ENCODE measurements at regions of chr10 and their contacts with region 1.

Region 1: GRCh38 chr10:80596391-80597257 is 58.9 kb downstream of the SH2D4B start:
- DNase-seq: peak; percentile 59
- ATAC-seq: peak; percentile 82
- H3K4me3 Mint-ChIP-seq: no peak overlapping the region
- H3K27ac Mint-ChIP-seq: no peak overlapping the region
- H3K4me1 Mint-ChIP-seq: no peaks in the 10 kb centered on the region
- H3K27me3 Mint-ChIP-seq: peaks cover 4% of the 10 kb centered on the region

Region 2: DNA sequence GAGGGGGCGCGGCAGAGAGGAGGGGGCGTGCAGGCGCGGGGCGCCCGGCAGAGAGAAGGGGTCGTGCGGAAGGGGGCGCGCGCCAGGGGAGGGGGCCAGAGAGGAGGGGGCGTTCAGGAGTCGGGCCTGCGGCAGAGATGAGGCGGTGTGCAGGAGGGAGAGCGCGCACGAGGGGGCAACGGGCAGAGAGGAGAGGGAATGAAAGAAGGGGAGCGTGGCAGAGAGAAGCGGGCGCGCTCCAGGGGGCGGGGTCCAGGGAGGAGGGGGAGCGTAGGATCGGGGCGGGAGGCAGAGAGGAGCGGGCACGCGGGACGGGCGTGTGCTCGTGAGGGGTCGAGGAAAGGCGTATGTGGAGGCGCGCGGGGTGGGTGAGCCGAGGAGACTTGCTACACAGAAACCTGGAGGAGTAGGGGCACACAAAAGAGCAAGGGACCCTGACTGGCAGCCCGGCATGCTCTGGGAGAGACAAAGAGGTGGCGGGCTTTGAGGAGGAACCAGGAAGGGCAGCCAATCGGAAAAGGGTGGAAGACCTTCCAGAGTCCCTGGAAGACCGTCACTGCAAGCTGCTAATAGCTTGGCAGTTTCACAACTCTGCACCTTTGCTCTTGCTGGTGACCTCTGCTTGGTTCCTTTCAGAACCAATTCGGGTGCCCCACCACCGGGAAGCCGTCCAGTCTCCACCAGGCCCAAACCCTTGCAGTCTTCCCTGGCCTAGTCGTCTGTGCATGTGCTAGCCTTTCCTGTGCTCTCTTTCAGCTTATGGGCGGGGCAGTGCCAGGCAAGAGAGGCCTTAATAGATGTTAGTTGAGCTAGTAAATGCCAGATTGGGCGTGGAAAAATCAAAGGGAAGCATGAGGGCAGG is 239.4 kb before region 1 on chr10:
- CTCF ChIA-PET with region 1: no interaction called
- POLR2A ChIA-PET with region 1: no interaction called
- DNase-seq: no peak
- ATAC-seq: peak; percentile 24
- H3K4me3 Mint-ChIP-seq: peak overlapping the region; percentile 22
- H3K27ac Mint-ChIP-seq: no peak overlapping the region
- H3K4me1 Mint-ChIP-seq: peaks cover 10% of the 10 kb centered on the region
- H3K27me3 Mint-ChIP-seq: peaks cover 38% of the 10 kb centered on the region

Region 3: DNA sequence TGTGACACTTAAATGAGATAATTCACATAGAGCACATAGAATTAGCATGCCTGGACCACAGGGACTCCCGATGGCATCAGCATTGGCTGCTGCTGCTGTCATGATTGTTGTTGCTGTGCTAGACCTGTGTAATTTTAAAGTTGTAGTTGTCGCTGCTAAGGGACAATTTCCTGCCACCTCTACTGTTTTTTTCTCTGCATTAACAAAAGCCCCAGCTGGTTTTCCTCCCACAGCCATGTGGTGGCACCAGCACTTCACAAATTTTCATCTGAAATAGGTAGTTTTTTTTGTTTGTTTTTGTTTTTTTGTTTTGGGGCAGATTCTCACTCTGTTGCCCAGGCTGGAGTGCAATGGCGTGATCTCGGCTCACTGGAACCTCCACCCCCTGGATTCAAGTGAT is 213.6 kb before region 1 on chr10:
- CTCF ChIA-PET with region 1: interaction called, 11 read pairs
- POLR2A ChIA-PET with region 1: no interaction called
- DNase-seq: peak; percentile 76
- ATAC-seq: peak; percentile 68
- H3K4me3 Mint-ChIP-seq: no peak overlapping the region
- H3K27ac Mint-ChIP-seq: no peak overlapping the region
- H3K4me1 Mint-ChIP-seq: peaks cover 14% of the 10 kb centered on the region
- H3K27me3 Mint-ChIP-seq: peaks cover 12% of the 10 kb centered on the region

Region 4: DNA sequence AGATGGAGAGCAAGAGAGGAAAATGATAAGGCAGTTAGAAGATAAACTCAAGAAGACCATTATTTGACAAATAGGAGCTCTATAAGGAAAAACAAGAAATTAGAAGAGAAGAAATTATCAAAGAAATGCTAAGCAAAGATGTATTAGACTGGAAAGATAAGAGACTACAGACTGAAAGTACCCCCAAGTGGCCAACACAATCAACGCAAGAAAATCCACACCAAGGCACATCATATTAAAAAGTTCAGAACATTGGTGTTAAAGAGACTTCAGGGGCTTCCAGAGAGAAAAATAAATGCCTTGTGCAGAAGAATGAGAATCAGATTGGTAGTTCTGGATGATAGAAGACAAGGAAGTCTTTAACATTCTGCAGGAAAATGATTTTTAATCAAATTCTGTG is 12.9 kb before region 1 on chr10:
- CTCF ChIA-PET with region 1: interaction called, 24 read pairs
- POLR2A ChIA-PET with region 1: no interaction called
- DNase-seq: no peak
- ATAC-seq: no peak
- H3K4me3 Mint-ChIP-seq: no peak overlapping the region
- H3K27ac Mint-ChIP-seq: no peak overlapping the region
- H3K4me1 Mint-ChIP-seq: peaks cover 9% of the 10 kb centered on the region
- H3K27me3 Mint-ChIP-seq: peaks cover 12% of the 10 kb centered on the region

Region 5: GRCh38 chr10:80612261-80612660 is 15.6 kb after region 1 on chr10:
- CTCF ChIA-PET with region 1: interaction called, 12 read pairs
- POLR2A ChIA-PET with region 1: no interaction called
- DNase-seq: no peak
- ATAC-seq: no peak
- H3K4me3 Mint-ChIP-seq: no peak overlapping the region
- H3K27ac Mint-ChIP-seq: no peak overlapping the region
- H3K4me1 Mint-ChIP-seq: peaks cover 8% of the 10 kb centered on the region
- H3K27me3 Mint-ChIP-seq: peaks cover 10% of the 10 kb centered on the region